ENCODE measurements at regions of chr16 and their contacts with region 1.

Region 1: GRCh38 chr16:31186176-31186575 is 6.2 kb downstream of the FUS start:
- DNase-seq: peak in 1 of 10 donors; percentile 31
- ATAC-seq: peak; percentile 10 to 25
- H3K4me3 Mint-ChIP-seq: peak overlapping the region; percentile 12 to 83 (median 78)
- H3K27ac Mint-ChIP-seq: peak overlapping the region; percentile 43 to 90 (median 78)
- H3K4me1 Mint-ChIP-seq: peaks cover 70 to 98% (median 92%) of the 10 kb centered on the region in 4 donors
- H3K27me3 Mint-ChIP-seq: no peaks in the 10 kb centered on the region

Region 2: DNA sequence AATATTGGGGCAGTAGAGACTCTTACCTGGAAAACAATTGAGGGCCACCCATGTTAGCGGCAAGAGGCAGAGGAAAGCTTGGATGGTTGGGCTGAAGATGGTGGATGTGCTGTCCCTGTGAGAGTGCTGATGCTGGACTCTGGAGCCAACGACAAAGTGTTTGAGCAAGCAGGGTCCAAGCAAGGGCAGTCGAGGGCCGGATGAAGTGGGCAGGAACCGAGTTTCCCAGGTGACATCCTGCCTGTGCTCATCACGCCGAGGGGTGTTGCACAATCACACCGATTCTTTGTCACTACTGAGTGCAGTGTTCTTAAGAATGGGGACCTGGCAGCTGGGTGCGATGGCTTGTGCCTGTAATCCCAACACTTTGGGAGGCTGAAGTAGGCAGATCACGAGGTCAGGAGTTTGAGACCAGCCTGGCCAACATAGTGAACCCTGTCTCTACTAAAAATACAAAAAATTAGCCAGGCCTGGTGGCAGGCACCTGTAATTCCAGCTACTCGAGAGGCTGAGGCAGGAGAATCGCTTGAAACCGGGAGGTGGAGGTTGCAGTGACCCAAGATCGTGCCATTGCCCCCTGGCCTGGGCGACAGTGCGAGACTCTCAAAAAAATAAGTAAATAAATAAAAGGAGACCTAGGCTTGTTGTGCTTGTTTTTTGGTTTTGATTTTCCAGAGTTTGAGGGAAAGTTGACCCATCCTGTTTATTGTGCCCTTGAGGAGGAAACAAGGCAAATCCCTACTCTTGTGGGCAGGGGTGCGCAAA is 10.3 kb after region 1 on chr16:
- POLR2A ChIA-PET with region 1: interaction called, 21 read pairs
- DNase-seq: no peak
- ATAC-seq: no peak
- H3K4me3 Mint-ChIP-seq: peak overlapping the region in 1 of 10 donors; percentile 34
- H3K27ac Mint-ChIP-seq: peak overlapping the region in 8 of 10 donors; percentile 8 to 79 (median 62)
- H3K4me1 Mint-ChIP-seq: peaks cover 31 to 66% (median 58%) of the 10 kb centered on the region in 4 donors
- H3K27me3 Mint-ChIP-seq: no peaks in the 10 kb centered on the region

Region 3: GRCh38 chr16:31202414-31203375 is 16.5 kb after region 1 on chr16 and contains the start of gene PYCARD:
- POLR2A ChIA-PET with region 1: interaction called, 13 read pairs
- DNase-seq: peak in 4 of 10 donors; percentile 18 to 55 (median 40)
- ATAC-seq: peak; percentile 41 to 45
- H3K4me3 Mint-ChIP-seq: peak within 1 kb of the TSS; percentile 85 to 93 (median 89)
- H3K27ac Mint-ChIP-seq: peak within 1 kb of the TSS; percentile 80 to 91 (median 88)
- H3K4me1 Mint-ChIP-seq: peaks cover 30 to 56% (median 54%) of the 10 kb centered on the region in 4 donors
- H3K27me3 Mint-ChIP-seq: no peaks in the 10 kb centered on the region
- polyA plus RNA-seq, gene PYCARD: 39.3 to 65.2 (median 39.7) TPM

Measured in naive thymus-derived CD8-positive, alpha-beta T cell (primary cell).